ENCODE measurements at regions of chr14 and their contacts with region 1.

Region 1: DNA sequence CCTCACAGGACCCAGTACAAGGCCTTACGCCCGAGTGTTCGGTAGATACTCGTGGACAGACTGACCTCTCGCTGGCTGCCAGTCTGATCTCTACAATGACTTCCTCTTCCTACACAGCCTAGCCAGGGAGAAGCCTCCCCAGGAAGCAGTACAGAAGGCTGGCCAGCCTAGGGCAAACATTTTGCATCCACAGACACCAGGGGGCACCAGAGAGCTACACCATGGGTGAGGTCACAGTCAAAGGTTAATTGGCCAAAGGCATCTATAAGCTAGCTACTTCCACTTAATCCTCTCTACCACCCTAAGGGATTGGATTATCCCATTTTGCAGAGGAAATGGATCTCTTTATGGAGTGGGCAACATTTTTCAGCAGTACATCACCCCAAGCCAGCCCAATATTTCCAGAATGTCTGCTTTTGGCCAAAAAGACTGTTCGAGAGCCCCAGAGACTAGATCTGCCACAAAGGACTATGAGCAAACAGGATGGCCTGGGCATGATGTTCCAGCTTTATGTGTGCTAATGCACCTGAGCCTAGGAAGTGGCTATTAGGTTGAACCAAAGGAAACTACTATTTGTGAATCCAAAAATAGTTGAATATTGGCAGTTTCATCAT is 14.6 kb upstream of the PNMA1 start:
- DNase-seq: peak; percentile 86
- ATAC-seq: peak; percentile 94
- H3K4me3 ChIP-seq: no peak overlapping the region
- H3K4me3 Mint-ChIP-seq: no peak overlapping the region
- H3K27ac ChIP-seq: peak overlapping the region; percentile 28 to 56
- H3K27ac Mint-ChIP-seq: peak overlapping the region; percentile 59
- H3K4me1 ChIP-seq: peaks cover 3 to 8% of the 10 kb centered on the region in 2 donors
- H3K4me1 Mint-ChIP-seq: peaks cover 15% of the 10 kb centered on the region
- H3K27me3 ChIP-seq: no peaks in the 10 kb centered on the region
- H3K27me3 Mint-ChIP-seq: no peaks in the 10 kb centered on the region
- CTCF ChIP-seq: peak; percentile 92

Region 2: DNA sequence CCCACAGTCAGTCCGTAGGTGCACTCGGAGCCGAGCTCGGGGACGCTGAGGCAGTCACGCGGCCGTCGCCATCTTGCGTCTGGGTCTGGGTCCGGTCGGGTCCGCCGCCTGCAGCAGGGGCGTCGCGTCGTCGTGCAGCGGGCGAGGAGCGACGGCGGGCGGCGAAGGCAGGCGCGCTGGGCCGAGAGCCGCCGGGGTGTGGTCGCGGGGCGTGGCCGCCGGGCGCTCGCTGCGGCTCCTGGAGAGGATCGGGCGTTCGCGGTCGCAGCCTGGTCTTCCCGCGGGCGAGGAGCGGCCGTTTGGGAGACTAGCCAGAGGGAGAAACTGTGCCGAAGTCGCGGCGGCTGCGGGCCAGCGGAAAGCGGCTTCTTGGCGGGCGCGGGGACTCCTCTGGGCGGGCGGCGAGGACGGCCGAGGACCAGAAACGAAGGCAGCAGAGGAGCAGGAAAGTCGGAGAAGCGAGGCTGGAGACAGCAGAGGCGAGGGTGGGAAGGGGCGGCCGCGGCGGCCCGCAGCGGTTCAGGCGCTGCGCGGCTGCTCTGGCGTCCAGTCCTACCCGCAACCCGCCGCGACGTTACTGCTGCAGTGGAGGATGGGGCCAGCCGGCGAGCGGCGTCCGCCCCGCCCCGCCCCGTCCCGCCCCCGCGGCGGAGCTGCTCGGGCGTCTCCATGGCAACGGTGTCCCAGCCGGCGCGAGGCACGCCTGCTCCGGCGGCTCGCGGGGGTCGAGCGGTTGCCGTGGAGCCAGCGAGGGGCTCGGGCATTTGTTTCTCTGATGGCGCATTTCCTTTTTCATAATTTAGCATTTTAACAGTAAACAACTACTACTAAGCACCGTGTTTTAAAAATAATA is 14.8 kb before region 1 on chr14 and contains the start of gene PNMA1:
- CTCF ChIA-PET with region 1: interaction called, 25 read pairs
- POLR2A ChIA-PET with region 1: interaction called, 11 read pairs
- intact Hi-C with region 1: loop called (anchors 2 kb)
- DNase-seq: peak; percentile 92
- ATAC-seq: peak; percentile 81
- H3K4me3 ChIP-seq: peak within 1 kb of the TSS; percentile 54 to 85 (median 77)
- H3K4me3 Mint-ChIP-seq: peak within 1 kb of the TSS; percentile 92
- H3K27ac ChIP-seq: peak within 1 kb of the TSS; percentile 39 to 81
- H3K27ac Mint-ChIP-seq: peak within 1 kb of the TSS; percentile 98
- H3K4me1 ChIP-seq: peaks cover 17 to 22% of the 10 kb centered on the region in 2 donors
- H3K4me1 Mint-ChIP-seq: peaks cover 21% of the 10 kb centered on the region
- H3K27me3 ChIP-seq: no peaks in the 10 kb centered on the region
- H3K27me3 Mint-ChIP-seq: no peaks in the 10 kb centered on the region
- CTCF ChIP-seq: no peak
- total RNA-seq, gene PNMA1: 29.6 and 31.6 TPM in 2 replicates

Region 3: DNA sequence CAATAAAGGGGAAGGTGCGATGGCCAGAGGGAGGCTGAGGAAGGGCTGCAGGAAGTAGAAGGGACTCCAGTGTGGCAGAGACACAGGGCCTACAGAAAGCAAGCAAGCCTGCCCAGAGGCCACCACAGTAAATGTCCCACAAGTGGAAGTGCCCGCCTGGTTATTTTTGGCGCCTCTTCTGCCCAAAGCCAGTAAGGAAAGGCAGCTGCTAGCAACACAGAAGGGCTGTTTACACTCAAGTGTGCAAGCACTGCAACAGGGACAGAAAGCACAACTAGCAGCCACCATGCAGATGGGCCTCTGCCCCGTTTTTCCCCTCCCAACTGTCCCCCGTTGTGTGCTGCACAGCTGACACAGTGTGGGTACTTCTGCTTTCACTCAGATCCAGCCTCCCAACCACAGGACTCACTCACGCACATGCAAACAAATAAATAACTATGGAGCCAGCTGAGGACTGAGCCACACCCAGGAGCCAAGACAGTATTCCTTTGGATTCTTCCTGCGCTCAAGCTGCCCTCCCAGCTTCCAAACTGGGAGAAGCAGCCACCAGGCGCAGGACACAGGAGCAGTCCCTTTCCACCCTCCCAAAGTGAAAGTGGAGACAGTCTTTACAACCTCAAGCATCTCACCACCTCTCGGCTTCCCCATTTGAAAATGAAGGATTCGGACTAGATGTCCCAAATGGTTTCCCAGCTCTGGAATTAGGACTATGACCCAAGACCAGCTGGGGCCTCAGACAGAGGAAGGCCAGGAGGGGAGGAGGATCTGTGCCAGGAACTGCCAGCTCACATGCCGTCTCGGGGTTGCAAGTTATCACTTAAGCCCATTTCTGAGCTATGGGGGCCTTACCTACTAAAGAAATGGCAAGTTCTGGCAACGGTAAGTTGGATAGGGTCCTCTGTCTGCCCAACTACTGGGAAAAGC is 25.4 kb after region 1 on chr14:
- CTCF ChIA-PET with region 1: interaction called, 184 read pairs
- POLR2A ChIA-PET with region 1: interaction called, 14 read pairs
- intact Hi-C with region 1: loop called (anchors 2 kb)
- DNase-seq: peak; percentile 89
- ATAC-seq: peak; percentile 56
- H3K4me3 ChIP-seq: peak overlapping the region; percentile 36 to 68 (median 48)
- H3K4me3 Mint-ChIP-seq: peak overlapping the region; percentile 88
- H3K27ac ChIP-seq: peak overlapping the region; percentile 86 to 90
- H3K27ac Mint-ChIP-seq: peak overlapping the region; percentile 94
- H3K4me1 ChIP-seq: peaks cover 86 to 94% of the 10 kb centered on the region in 2 donors
- H3K4me1 Mint-ChIP-seq: peaks cover 93% of the 10 kb centered on the region
- H3K27me3 ChIP-seq: no peaks in the 10 kb centered on the region
- H3K27me3 Mint-ChIP-seq: no peaks in the 10 kb centered on the region
- CTCF ChIP-seq: no peak

Region 4: DNA sequence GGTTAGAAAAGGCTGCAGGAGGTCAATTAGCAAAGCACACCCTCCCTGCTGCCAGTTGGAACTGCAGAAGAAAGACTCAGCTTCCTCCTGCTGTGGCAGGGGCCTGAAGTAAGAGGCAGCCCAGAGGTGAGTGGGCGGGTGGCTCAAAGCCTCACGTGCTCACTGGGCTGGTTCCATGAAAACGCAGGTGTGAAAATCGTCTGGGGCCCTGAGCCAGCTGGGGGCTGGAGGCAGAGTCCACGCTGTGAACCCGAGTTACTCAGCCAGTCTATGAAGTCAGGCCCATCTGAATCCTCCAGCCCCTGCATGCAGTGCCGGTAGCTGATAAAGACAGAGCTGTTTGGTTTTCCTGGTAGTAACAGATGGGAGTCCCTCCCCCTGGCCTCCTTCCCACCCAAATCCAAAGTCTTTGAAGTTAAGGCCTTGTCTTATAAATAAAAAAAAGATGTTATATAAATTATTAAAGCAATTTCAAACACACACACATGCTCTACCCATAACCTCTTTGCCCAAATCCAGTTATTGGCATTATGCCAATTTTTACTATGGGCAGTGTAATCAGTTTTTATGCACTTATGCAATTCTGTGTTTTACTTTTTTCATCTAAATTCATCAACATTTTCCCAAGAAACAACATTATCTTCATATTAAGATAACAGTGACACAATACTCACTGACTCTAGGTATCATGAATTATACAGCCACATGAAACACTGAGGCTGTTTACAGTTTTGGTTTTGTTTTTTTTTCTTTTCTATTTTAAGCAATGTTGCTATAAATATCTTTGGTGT is 43.2 kb after region 1 on chr14:
- CTCF ChIA-PET with region 1: interaction called, 200 read pairs
- POLR2A ChIA-PET with region 1: interaction called, 4 read pairs
- intact Hi-C with region 1: loop called (anchors 1 kb)
- DNase-seq: peak; percentile 89
- ATAC-seq: peak; percentile 61
- H3K4me3 ChIP-seq: peak overlapping the region in 3 of 5 experiments; percentile 5 to 52 (median 10)
- H3K4me3 Mint-ChIP-seq: peak overlapping the region; percentile 87
- H3K27ac ChIP-seq: peak overlapping the region; percentile 96 to 97
- H3K27ac Mint-ChIP-seq: peak overlapping the region; percentile 99
- H3K4me1 ChIP-seq: peaks cover 83 to 96% of the 10 kb centered on the region in 2 donors
- H3K4me1 Mint-ChIP-seq: peaks cover 76% of the 10 kb centered on the region
- H3K27me3 ChIP-seq: no peaks in the 10 kb centered on the region
- H3K27me3 Mint-ChIP-seq: no peaks in the 10 kb centered on the region
- CTCF ChIP-seq: no peak

Region 5: DNA sequence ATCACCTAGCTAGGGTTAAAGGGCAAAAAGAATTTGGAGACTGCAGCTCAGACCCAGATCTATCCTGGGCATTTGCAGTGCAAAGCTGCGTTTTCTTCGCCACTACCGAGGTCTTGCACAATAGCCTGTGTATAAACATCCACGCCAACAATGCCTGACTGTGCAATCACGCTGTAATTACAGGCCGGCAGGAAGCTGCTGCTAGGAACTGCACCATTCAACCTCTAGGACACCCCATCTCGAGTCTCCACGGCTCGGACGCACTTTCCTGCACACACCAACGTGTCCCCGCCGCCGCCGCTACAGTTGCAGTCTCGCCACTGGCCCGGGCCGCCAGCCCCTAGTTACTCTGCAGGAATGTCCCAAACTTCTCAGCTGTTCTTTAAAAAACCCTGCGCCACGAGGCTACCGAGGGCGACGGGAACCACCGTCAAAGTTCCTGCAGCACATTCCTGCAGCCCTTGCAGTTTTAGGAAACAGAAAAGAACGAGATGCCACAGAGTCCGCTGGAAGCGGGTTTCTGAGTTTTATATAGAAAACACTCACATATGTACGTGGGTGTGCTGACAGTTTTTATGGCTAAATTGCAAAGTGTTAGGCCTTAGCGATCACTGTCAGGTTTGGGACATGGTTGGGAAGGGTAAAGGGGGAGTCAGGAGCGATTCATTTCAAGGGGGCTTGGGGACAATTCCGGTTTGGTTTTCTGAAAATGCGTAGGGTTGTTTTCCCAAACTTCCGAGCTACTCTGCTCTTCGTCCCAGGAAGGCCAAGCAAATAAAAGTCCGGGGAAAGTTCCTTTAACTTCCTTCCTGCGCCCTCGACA is 57.3 kb after region 1 on chr14:
- CTCF ChIA-PET with region 1: interaction called, 200 read pairs
- POLR2A ChIA-PET with region 1: interaction called, 3 read pairs
- intact Hi-C with region 1: loop called (anchors 1 kb)
- DNase-seq: peak; percentile 70
- ATAC-seq: peak; percentile 53
- H3K4me3 ChIP-seq: peak overlapping the region; percentile 72 to 89 (median 80)
- H3K4me3 Mint-ChIP-seq: peak overlapping the region; percentile 92
- H3K27ac ChIP-seq: peak overlapping the region; percentile 37 to 90
- H3K27ac Mint-ChIP-seq: peak overlapping the region; percentile 93
- H3K4me1 ChIP-seq: peaks cover 43 to 49% of the 10 kb centered on the region in 2 donors
- H3K4me1 Mint-ChIP-seq: peaks cover 59% of the 10 kb centered on the region
- H3K27me3 ChIP-seq: no peaks in the 10 kb centered on the region
- H3K27me3 Mint-ChIP-seq: no peaks in the 10 kb centered on the region
- CTCF ChIP-seq: peak; percentile 9

Region 6: GRCh38 chr14:73825551-73826188 is 96.8 kb after region 1 on chr14:
- CTCF ChIA-PET with region 1: interaction called, 299 read pairs
- POLR2A ChIA-PET with region 1: interaction called, 3 read pairs
- intact Hi-C with region 1: loop called (anchors 1 kb)
- DNase-seq: peak; percentile 81
- ATAC-seq: peak; percentile 99
- H3K4me3 ChIP-seq: no peak overlapping the region
- H3K4me3 Mint-ChIP-seq: no peak overlapping the region
- H3K27ac ChIP-seq: no peak overlapping the region
- H3K27ac Mint-ChIP-seq: no peak overlapping the region
- H3K4me1 ChIP-seq: no peaks in the 10 kb centered on the region
- H3K4me1 Mint-ChIP-seq: peaks cover 4% of the 10 kb centered on the region
- H3K27me3 ChIP-seq: no peaks in the 10 kb centered on the region
- H3K27me3 Mint-ChIP-seq: no peaks in the 10 kb centered on the region
- CTCF ChIP-seq: peak; percentile 93